ENCODE measurements at regions of chr1 and their contacts with region 1.

Region 1: GRCh38 chr1:165597883-165598675 is 33.0 kb upstream of the MGST3 start:
- DNase-seq: peak; percentile 98
- H3K4me3 Mint-ChIP-seq: peak overlapping the region; percentile 91
- H3K27ac Mint-ChIP-seq: peak overlapping the region; percentile 80
- H3K4me1 Mint-ChIP-seq: peaks cover 28% of the 10 kb centered on the region
- H3K27me3 Mint-ChIP-seq: peaks cover 42% of the 10 kb centered on the region

Region 2: GRCh38 chr1:165367375-165367993 is 230.6 kb before region 1 on chr1:
- intact Hi-C with region 1: loop called (anchors 1 kb)
- DNase-seq: peak; percentile 92
- H3K4me3 Mint-ChIP-seq: no peak overlapping the region
- H3K27ac Mint-ChIP-seq: no peak overlapping the region
- H3K4me1 Mint-ChIP-seq: no peaks in the 10 kb centered on the region
- H3K27me3 Mint-ChIP-seq: peaks cover 62% of the 10 kb centered on the region

Region 3: GRCh38 chr1:165481820-165482532 is 116.1 kb before region 1 on chr1:
- intact Hi-C with region 1: loop called (anchors 5 kb)
- DNase-seq: peak; percentile 60
- H3K4me3 Mint-ChIP-seq: no peak overlapping the region
- H3K27ac Mint-ChIP-seq: peak overlapping the region; percentile 39
- H3K4me1 Mint-ChIP-seq: peaks cover 19% of the 10 kb centered on the region
- H3K27me3 Mint-ChIP-seq: peaks cover 22% of the 10 kb centered on the region

Region 4: GRCh38 chr1:165624441-165624840 is 26.4 kb after region 1 on chr1:
- intact Hi-C with region 1: no loop called
- DNase-seq: no peak
- H3K4me3 Mint-ChIP-seq: no peak overlapping the region
- H3K27ac Mint-ChIP-seq: no peak overlapping the region
- H3K4me1 Mint-ChIP-seq: no peaks in the 10 kb centered on the region
- H3K27me3 Mint-ChIP-seq: peaks cover 29% of the 10 kb centered on the region

Region 5: GRCh38 chr1:165697881-165698760 is 100.0 kb after region 1 on chr1 and contains the start of gene ALDH9A1:
- intact Hi-C with region 1: loop called (anchors 5 kb)
- DNase-seq: peak; percentile 96
- H3K4me3 Mint-ChIP-seq: peak within 1 kb of the TSS; percentile 91
- H3K27ac Mint-ChIP-seq: peak within 1 kb of the TSS; percentile 96
- H3K4me1 Mint-ChIP-seq: peaks cover 21% of the 10 kb centered on the region
- H3K27me3 Mint-ChIP-seq: peaks cover 2% of the 10 kb centered on the region
- total RNA-seq, gene ALDH9A1: 41.8 and 43.8 TPM in 2 replicates

Region 6: GRCh38 chr1:165827268-165828102 is 229.4 kb after region 1 on chr1 and contains the start of gene UCK2:
- intact Hi-C with region 1: loop called (anchors 1 kb)
- DNase-seq: peak; percentile 88
- H3K4me3 Mint-ChIP-seq: peak within 1 kb of the TSS; percentile 97
- H3K27ac Mint-ChIP-seq: peak within 1 kb of the TSS; percentile 95
- H3K4me1 Mint-ChIP-seq: peaks cover 16% of the 10 kb centered on the region
- H3K27me3 Mint-ChIP-seq: peaks cover 16% of the 10 kb centered on the region
- total RNA-seq, gene UCK2: 108 and 110 TPM in 2 replicates

Region 7: GRCh38 chr1:166479052-166479631 is 881.1 kb after region 1 on chr1:
- intact Hi-C with region 1: loop called (anchors 5 kb)
- DNase-seq: peak; percentile 83
- H3K4me3 Mint-ChIP-seq: no peak overlapping the region
- H3K27ac Mint-ChIP-seq: no peak overlapping the region
- H3K4me1 Mint-ChIP-seq: no peaks in the 10 kb centered on the region
- H3K27me3 Mint-ChIP-seq: peaks cover 2% of the 10 kb centered on the region